Common myeloid progenitor, CD34-positive (primary cell): ENCODE measurements at regions of chr2 and their contacts with region 1.

Region 1: DNA sequence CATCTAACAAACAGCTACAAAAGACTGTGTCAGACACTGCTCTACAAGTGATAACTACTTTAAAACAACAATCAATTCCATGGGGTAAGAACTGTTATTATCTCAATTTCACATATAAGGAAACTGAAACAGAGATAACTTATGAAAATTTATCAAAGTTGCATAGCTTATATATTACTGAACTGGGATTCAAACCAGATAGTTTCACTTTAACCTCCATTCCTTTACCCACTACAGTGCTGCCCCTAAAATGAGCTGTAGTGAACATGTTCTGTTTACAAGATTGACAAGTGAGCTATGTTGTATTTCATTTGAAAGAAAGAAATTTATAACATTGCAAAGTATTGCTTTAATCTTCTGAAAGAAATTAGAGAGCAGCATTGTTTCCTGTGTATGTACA is 14.1 kb upstream of the GCG start:
- DNase-seq: no peak
- H3K4me3 ChIP-seq: no peak overlapping the region
- H3K27ac ChIP-seq: no peak overlapping the region
- H3K4me1 ChIP-seq: no peaks in the 10 kb centered on the region
- H3K27me3 ChIP-seq: no peaks in the 10 kb centered on the region

Region 2: DNA sequence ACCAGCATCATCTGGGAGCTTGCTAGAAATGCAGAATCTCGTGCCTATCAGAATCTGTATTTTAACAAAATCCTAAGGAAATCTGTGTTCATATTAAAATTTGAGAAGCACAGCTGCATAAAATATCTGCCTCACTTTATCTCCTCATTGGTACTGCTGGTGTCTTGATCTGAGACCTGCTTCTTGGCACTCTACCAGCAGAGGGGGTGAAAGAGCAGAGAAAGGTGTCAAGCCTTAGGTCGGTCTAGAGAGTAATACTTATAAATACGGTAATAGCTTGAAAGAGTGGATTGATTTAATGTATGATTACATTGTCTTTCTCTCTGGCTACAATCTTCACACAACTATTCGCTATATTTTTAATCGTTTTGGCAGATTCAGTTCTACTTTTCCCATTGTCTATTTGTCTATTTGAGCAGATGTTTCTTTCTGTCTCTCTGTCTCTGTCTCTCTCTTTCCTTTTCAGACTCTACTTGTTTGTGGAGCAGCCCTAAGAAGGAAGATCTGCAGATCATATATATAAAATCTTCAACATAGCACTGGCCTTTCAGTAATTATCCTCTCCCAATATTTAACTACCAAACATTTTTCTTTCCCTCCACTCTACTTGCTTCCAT is 12.5 kb before region 1 on chr2:
- CTCF ChIA-PET with region 1: interaction called, 10 read pairs
- POLR2A ChIA-PET with region 1: no interaction called
- DNase-seq: peak; percentile 67 to 83 (median 77)
- H3K4me3 ChIP-seq: peak overlapping the region in 1 of 7 experiments; percentile 25
- H3K27ac ChIP-seq: no peak overlapping the region
- H3K4me1 ChIP-seq: no peaks in the 10 kb centered on the region
- H3K27me3 ChIP-seq: no peaks in the 10 kb centered on the region